ENCODE measurements at regions of chr20 and their contacts with region 1.

Region 1: DNA sequence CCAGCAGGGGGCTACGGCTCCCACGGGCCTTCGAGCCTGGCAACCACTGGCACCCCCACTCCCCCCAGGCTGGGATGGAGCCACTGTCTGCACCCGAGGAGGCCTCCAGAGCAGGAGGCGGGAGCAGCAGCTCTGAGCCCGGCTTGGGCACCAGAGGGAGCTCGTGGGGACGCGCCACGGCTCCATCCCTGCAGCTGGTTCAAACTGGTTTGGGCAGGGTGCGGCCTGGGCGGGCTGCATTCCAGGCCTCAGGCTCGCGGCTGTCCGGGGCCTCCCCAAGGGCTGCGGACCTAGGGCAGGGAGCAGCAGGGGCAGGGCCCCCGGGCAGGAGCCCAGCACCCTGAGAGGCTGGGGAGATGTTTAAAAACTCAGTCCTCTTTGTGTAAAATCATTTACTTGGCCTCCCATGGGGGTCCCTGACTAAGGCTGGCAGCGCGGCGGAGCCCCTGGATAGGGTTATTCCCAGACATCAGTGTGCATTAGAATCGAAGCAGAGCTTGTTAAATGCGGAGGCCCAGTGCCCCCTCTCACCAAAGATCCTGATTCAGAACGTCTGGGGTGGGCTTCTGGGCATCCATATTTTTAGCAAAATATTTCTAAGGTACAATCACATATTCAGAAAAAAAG is 4.1 kb upstream of the BCAS4 start:
- DNase-seq: peak; percentile 76
- H3K4me3 ChIP-seq: no peak overlapping the region
- H3K27ac ChIP-seq: peak overlapping the region; percentile 75
- H3K27me3 ChIP-seq: no peaks in the 10 kb centered on the region
- CTCF ChIP-seq: peak; percentile 84

Region 2: GRCh38 chr20:50558483-50558947 is 232.2 kb before region 1 on chr20:
- CTCF ChIA-PET with region 1: no interaction called
- POLR2A ChIA-PET with region 1: no interaction called
- DNase-seq: no peak
- H3K4me3 ChIP-seq: no peak overlapping the region
- H3K27ac ChIP-seq: peak overlapping the region; percentile 39
- H3K27me3 ChIP-seq: no peaks in the 10 kb centered on the region
- CTCF ChIP-seq: no peak

Region 3: GRCh38 chr20:50625986-50626677 is 164.6 kb before region 1 on chr20:
- CTCF ChIA-PET with region 1: interaction called, 19 read pairs
- POLR2A ChIA-PET with region 1: interaction called, 4 read pairs
- DNase-seq: no peak
- H3K4me3 ChIP-seq: no peak overlapping the region
- H3K27ac ChIP-seq: no peak overlapping the region
- H3K27me3 ChIP-seq: no peaks in the 10 kb centered on the region
- CTCF ChIP-seq: peak; percentile 70

Region 4: DNA sequence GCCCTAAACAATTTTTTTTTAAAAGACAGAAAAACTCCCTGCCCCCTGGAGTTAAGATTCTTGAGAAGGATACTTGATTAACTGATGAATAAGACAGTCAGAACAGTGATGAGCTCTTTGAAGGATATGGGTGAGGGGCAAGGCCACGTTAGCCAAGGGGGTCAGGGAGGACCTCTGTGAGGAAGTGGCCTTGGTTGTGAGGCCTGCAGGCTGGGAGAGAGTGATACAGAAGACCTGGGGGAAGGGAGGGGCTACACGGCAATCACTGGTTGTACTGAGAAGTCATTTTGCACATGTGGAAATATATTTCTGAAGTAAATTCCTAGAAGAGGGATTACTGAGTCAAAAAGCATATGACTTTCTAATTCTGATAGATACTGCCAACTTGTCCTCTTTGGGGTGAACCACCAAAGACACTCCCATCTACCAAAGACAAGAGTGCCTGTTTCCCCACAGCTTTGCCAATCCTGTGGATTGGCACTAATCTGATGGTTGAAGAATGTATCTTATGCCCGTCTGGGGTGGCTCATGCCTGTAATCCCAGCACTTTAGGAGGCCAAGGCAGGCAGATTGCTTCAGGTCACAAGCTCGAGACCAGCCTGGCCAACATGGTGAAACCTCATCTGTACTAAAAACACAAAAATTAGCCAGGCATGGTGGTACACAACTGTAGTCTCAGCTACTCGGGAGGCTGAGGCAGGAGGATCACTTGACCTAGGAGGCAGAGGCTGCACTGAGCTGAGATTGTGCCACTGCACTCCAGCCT is 18.2 kb before region 1 on chr20:
- CTCF ChIA-PET with region 1: interaction called, 14 read pairs
- POLR2A ChIA-PET with region 1: no interaction called
- DNase-seq: no peak
- H3K4me3 ChIP-seq: no peak overlapping the region
- H3K27ac ChIP-seq: no peak overlapping the region
- H3K27me3 ChIP-seq: peaks cover 3% of the 10 kb centered on the region
- CTCF ChIP-seq: no peak

Region 5: DNA sequence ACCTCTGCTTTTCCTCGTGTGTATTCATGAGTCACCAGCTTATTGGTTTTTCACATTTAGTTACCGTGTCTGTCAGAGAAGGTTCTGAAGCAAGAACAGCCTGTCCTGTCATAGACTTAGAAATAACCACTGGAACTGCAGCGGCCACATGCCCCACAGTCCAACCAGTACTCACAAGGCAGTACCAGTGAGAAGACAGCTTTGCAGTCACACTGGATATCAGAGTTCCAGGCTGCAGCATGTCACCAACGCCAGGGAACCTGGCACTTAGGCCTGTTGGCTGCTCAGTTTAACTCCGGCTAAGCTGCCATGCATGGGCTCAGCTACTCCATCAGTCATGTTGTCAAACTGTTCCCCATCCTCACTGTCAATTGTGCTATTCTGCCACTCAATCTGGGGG is 100.4 kb after region 1 on chr20:
- CTCF ChIA-PET with region 1: interaction called, 11 read pairs
- POLR2A ChIA-PET with region 1: interaction called, 3 read pairs
- DNase-seq: no peak
- H3K4me3 ChIP-seq: no peak overlapping the region
- H3K27ac ChIP-seq: no peak overlapping the region
- H3K27me3 ChIP-seq: no peaks in the 10 kb centered on the region
- CTCF ChIP-seq: no peak

Region 6: GRCh38 chr20:50929299-50930138 is 138.8 kb after region 1 on chr20:
- CTCF ChIA-PET with region 1: interaction called, 201 read pairs
- POLR2A ChIA-PET with region 1: interaction called, 17 read pairs
- DNase-seq: peak; percentile 92
- H3K4me3 ChIP-seq: peak overlapping the region; percentile 86
- H3K27ac ChIP-seq: peak overlapping the region; percentile 13
- H3K27me3 ChIP-seq: no peaks in the 10 kb centered on the region
- CTCF ChIP-seq: peak; percentile 99

Region 7: DNA sequence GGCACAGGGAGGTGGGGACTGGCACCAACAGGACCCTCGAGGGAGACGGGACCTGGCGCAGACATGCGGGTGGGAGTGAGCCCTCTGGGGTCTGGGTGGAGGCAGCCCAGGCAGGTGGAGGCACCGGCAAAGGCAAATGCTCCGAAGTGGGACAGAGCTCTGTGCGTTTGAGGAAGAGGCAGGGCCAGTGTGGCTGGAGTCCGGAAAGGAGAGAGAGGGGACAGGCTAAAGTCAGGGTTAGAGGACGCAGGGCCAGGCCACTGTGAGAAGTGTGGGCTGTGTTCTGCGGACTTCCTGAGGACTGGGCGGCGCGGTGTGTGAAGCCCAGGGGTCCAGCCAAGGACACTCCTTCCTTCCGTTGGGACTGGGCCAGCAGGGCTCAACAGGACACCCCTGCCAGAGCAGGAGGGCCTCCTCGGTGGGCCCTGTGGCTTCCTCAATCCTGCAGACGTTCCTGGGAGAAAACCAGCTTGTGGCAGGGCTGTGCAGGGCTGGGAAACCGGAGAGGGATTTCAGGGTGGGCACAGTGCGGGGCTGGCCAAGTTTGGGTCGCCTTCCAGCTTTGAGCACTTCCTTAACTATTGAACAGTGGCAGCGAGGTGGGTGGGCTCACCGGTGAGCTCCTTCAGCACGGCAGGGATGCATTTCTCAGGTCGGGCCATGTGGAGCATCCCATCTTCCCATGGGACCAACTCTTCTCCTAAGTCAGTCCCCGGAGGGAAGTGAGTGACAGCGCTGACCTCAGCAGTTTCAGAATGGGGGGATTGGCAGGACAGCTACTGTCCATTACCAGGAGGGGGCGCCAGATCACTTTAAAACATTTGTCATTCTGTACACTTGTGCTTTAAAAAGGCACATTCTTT is 190.3 kb after region 1 on chr20:
- CTCF ChIA-PET with region 1: interaction called, 28 read pairs
- POLR2A ChIA-PET with region 1: no interaction called
- DNase-seq: no peak
- H3K4me3 ChIP-seq: no peak overlapping the region
- H3K27ac ChIP-seq: peak overlapping the region; percentile 99
- H3K27me3 ChIP-seq: no peaks in the 10 kb centered on the region
- CTCF ChIP-seq: peak; percentile 83

Region 8: GRCh38 chr20:51732096-51732791 is 941.5 kb after region 1 on chr20:
- CTCF ChIA-PET with region 1: no interaction called
- POLR2A ChIA-PET with region 1: no interaction called
- DNase-seq: no peak
- H3K4me3 ChIP-seq: peak overlapping the region; percentile 52
- H3K27ac ChIP-seq: peak overlapping the region; percentile 93
- H3K27me3 ChIP-seq: no peaks in the 10 kb centered on the region
- CTCF ChIP-seq: no peak